ENCODE measurements at regions of chr14 and their contacts with region 1.

Region 1: GRCh38 chr14:32702562-32702961 is 236.1 kb upstream of the NPAS3 start:
- DNase-seq: peak; percentile 42 to 73 (median 50)
- ATAC-seq: peak; percentile 79 to 93 (median 90)
- H3K4me3 ChIP-seq: peak overlapping the region in 2 of 12 donors; percentile 10 to 27
- H3K27ac ChIP-seq: peak overlapping the region; percentile 30 to 95 (median 72)
- H3K4me1 ChIP-seq: peaks cover 0 to 35% (median 28%) of the 10 kb centered on the region in 12 donors
- H3K27me3 ChIP-seq: no peaks in the 10 kb centered on the region
- CTCF ChIP-seq: no peak
- POLR2A ChIP-seq: peak in 1 of 2 donors; percentile 26

Region 2: GRCh38 chr14:32593290-32593942 is 109.1 kb before region 1 on chr14:
- intact Hi-C with region 1: loop called in 1 of 10 experiments (anchors 10 kb)
- DNase-seq: no peak
- ATAC-seq: peak in 1 of 4 donors; percentile 14
- H3K4me3 ChIP-seq: no peak overlapping the region
- H3K27ac ChIP-seq: peak overlapping the region in 2 of 12 donors; percentile 9 to 26
- H3K4me1 ChIP-seq: peaks cover 0 to 36% (median 22%) of the 10 kb centered on the region in 12 donors
- H3K27me3 ChIP-seq: no peaks in the 10 kb centered on the region
- CTCF ChIP-seq: no peak
- POLR2A ChIP-seq: no peak

Region 3: GRCh38 chr14:32977913-32978312 is 275.4 kb after region 1 on chr14:
- intact Hi-C with region 1: no loop called
- DNase-seq: no peak
- ATAC-seq: no peak
- H3K4me3 ChIP-seq: no peak overlapping the region
- H3K27ac ChIP-seq: no peak overlapping the region
- H3K4me1 ChIP-seq: no peaks in the 10 kb centered on the region
- H3K27me3 ChIP-seq: no peaks in the 10 kb centered on the region
- CTCF ChIP-seq: no peak
- POLR2A ChIP-seq: no peak

Region 4: GRCh38 chr14:32998433-32998832 is 295.9 kb after region 1 on chr14:
- intact Hi-C with region 1: loop called in 1 of 10 experiments (anchors 10 kb)
- DNase-seq: no peak
- ATAC-seq: no peak
- H3K4me3 ChIP-seq: no peak overlapping the region
- H3K27ac ChIP-seq: no peak overlapping the region
- H3K4me1 ChIP-seq: no peaks in the 10 kb centered on the region
- H3K27me3 ChIP-seq: no peaks in the 10 kb centered on the region
- CTCF ChIP-seq: peak in 11 of 12 donors; percentile 8 to 60 (median 44)
- POLR2A ChIP-seq: no peak

Measured in heart left ventricle (tissue), 16 donors.